GM12878 (cell line): ENCODE measurements at regions of chr9 and their contacts with region 1.

Region 1: GRCh38 chr9:100352727-100353505 is at the start of gene TEX10:
- DNase-seq: peak; percentile 57
- ATAC-seq: peak; percentile 85
- H3K4me3 ChIP-seq: peak within 1 kb of the TSS; percentile 95
- H3K27ac ChIP-seq: peak within 1 kb of the TSS; percentile 82
- H3K4me1 ChIP-seq: peaks cover 8% of the 10 kb centered on the region
- H3K27me3 ChIP-seq: no peaks in the 10 kb centered on the region
- CTCF ChIP-seq: no peak
- EP300 ChIP-seq: peak in 1 of 2 experiments; percentile 35; a peak in 1 of 4 replicates
- POLR2A ChIP-seq: peak; percentile 96
- RAD21 ChIP-seq: no peak
- polyA plus RNA-seq, gene TEX10: 17.4 to 25.8 TPM

Region 2: GRCh38 chr9:100411472-100412283 is 58.8 kb after region 1 on chr9:
- CTCF ChIA-PET with region 1: no interaction called
- POLR2A ChIA-PET with region 1: interaction called, 5 read pairs
- RAD21 ChIA-PET with region 1: interaction called, 3 read pairs
- SMC1A ChIA-PET with region 1: interaction called, 3 read pairs
- in situ Hi-C with region 1: no loop called
- intact Hi-C with region 1: loop called (anchors 5 kb)
- DNase-seq: peak; percentile 66
- ATAC-seq: peak; percentile 100
- H3K4me3 ChIP-seq: peak overlapping the region; percentile 50
- H3K27ac ChIP-seq: no peak overlapping the region
- H3K4me1 ChIP-seq: no peaks in the 10 kb centered on the region
- H3K27me3 ChIP-seq: no peaks in the 10 kb centered on the region
- CTCF ChIP-seq: no peak
- EP300 ChIP-seq: no peak
- POLR2A ChIP-seq: peak; percentile 84
- RAD21 ChIP-seq: no peak

Region 3: GRCh38 chr9:100426530-100427428 is 73.9 kb after region 1 on chr9 and contains the start of gene MSANTD3:
- CTCF ChIA-PET with region 1: interaction called, 4 read pairs
- POLR2A ChIA-PET with region 1: interaction called, 7 read pairs
- RAD21 ChIA-PET with region 1: no interaction called
- SMC1A ChIA-PET with region 1: interaction called, 3 read pairs
- in situ Hi-C with region 1: no loop called
- intact Hi-C with region 1: loop called (anchors 5 kb)
- DNase-seq: no peak
- ATAC-seq: peak; percentile 81
- H3K4me3 ChIP-seq: peak within 1 kb of the TSS; percentile 76
- H3K27ac ChIP-seq: 0 out of 2 replicates have a peak within 1 kb of the TSS, but pooled peaks have one; percentile 25
- H3K4me1 ChIP-seq: peaks cover 12% of the 10 kb centered on the region
- H3K27me3 ChIP-seq: no peaks in the 10 kb centered on the region
- CTCF ChIP-seq: peak in 1 of 3 experiments; percentile 18; a peak in 1 of 6 replicates
- EP300 ChIP-seq: no peak
- POLR2A ChIP-seq: no peak; the same call in 1 of the 2 replicates
- RAD21 ChIP-seq: no peak
- polyA plus RNA-seq, gene MSANTD3: 7.0 to 12.1 TPM

Region 4: GRCh38 chr9:101409079-101409477 is 1056.2 kb after region 1 on chr9:
- CTCF ChIA-PET with region 1: no interaction called
- POLR2A ChIA-PET with region 1: no interaction called
- RAD21 ChIA-PET with region 1: no interaction called
- SMC1A ChIA-PET with region 1: no interaction called
- in situ Hi-C with region 1: no loop called
- intact Hi-C with region 1: no loop called
- DNase-seq: no peak
- ATAC-seq: no peak
- H3K4me3 ChIP-seq: no peak overlapping the region
- H3K27ac ChIP-seq: no peak overlapping the region
- H3K4me1 ChIP-seq: no peaks in the 10 kb centered on the region
- H3K27me3 ChIP-seq: no peaks in the 10 kb centered on the region
- CTCF ChIP-seq: no peak
- EP300 ChIP-seq: no peak
- POLR2A ChIP-seq: no peak
- RAD21 ChIP-seq: no peak